ENCODE measurements at regions of chr14 and their contacts with region 1.

Region 1: GRCh38 chr14:99415496-99416281 is 65.0 kb downstream of the SETD3 start:
- H3K4me3 ChIP-seq: no peak overlapping the region
- H3K27ac ChIP-seq: no peak overlapping the region
- H3K4me1 ChIP-seq: peaks cover 2% of the 10 kb centered on the region; the same call in 1 of the 2 replicates
- CTCF ChIP-seq: peak; percentile 52

Region 2: DNA sequence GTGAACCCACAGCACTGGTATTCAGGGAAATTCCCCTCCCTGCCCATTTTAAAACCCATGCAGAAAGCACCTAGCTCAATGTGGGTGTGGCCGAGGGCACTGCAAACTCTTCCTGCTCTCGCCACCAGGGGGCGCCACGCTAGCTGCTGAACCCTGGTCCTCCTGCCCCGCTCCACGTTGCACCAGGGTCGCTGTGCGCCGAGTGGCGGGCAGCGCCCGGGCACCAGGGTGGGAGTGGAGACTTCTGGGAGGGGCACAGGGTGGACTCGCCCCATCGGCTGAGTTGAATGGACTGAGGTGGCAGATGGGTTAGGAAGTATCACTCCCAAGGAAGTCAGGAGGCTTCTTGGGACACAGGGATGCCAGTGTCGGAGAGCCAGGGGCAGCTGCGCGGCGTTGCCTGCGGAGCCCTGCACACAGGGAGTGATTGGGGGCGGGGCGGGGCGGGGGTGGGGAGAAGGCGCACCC is 95.5 kb before region 1 on chr14:
- CTCF ChIA-PET with region 1: interaction called, 39 read pairs
- POLR2A ChIA-PET with region 1: no interaction called
- H3K4me3 ChIP-seq: no peak overlapping the region; the same call in 1 of the 2 replicates
- H3K27ac ChIP-seq: no peak overlapping the region
- H3K4me1 ChIP-seq: no peaks in the 10 kb centered on the region
- CTCF ChIP-seq: peak; percentile 85

Region 3: DNA sequence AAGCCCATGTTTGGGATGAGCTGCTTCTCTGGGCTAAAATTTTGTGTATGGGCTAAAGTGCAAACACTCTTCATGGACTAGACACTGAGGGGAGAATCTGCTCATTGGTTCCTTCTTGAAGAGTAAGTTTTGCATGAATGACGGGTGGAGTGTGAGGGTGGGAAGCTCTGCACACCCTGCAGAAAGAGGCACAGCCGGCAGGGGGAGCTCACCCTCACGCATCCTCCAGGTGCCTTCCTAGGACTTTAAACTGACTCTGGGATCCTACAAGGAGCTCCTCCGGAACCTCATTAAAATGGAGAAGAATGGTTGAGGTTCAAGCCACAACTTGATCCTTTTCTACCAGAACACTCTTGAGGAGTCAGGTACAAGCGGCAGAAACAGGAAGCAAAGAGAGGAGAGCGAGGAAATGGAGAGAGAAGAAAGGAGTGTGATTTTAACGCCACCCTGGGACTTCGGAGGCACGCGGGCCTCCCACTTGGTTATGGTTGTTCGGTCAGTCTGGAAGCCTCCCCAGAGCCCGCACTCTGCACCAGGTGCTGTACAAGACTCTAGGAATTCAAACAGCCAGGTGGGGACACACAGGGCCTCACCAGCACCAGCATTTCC is 22.5 kb before region 1 on chr14:
- CTCF ChIA-PET with region 1: interaction called, 175 read pairs
- POLR2A ChIA-PET with region 1: no interaction called
- H3K4me3 ChIP-seq: no peak overlapping the region
- H3K27ac ChIP-seq: no peak overlapping the region
- H3K4me1 ChIP-seq: 0 out of 2 replicates have a peak, but pooled peaks cover 7% of the 10 kb centered on the region
- CTCF ChIP-seq: peak; percentile 32; the same call in 1 of the 2 replicates

Region 4: GRCh38 chr14:99401621-99402284 is 13.9 kb before region 1 on chr14:
- CTCF ChIA-PET with region 1: interaction called, 175 read pairs
- POLR2A ChIA-PET with region 1: no interaction called
- H3K4me3 ChIP-seq: no peak overlapping the region
- H3K27ac ChIP-seq: no peak overlapping the region
- H3K4me1 ChIP-seq: no peaks in the 10 kb centered on the region
- CTCF ChIP-seq: no peak

Region 5: DNA sequence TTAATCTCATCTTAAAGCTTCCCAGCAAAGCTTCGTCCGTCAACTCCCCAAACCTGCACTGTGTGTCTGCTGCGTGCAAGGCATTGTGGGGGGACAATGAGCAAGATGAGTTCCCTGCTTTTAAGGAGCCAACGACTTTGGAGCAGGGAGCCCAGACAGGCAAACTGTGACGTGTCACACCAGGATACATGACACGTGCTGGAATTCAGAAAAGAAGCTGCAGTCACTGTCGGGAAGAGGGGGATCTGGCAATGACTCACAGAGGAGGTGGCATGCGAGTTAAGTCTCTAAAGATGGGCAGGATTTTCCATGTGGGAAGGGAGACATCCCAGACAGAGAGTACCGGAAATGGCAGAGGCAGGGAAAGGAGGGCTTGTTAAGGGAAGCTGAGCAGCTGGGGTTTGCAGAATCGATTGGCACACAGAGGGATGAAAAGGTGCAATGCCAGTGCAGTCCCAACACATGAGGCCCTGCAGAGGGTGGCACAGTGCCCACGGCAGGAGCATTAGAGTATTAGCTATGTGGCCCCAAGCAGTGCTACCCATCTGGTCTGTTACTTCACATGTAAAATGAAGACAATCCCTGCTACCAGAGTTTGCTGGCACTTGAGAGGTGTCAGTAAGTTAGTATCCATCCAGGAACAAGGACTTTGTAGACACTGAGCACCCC is 12.1 kb after region 1 on chr14:
- CTCF ChIA-PET with region 1: interaction called, 32 read pairs
- POLR2A ChIA-PET with region 1: no interaction called
- H3K4me3 ChIP-seq: no peak overlapping the region
- H3K27ac ChIP-seq: no peak overlapping the region
- H3K4me1 ChIP-seq: no peaks in the 10 kb centered on the region
- CTCF ChIP-seq: no peak

Region 6: DNA sequence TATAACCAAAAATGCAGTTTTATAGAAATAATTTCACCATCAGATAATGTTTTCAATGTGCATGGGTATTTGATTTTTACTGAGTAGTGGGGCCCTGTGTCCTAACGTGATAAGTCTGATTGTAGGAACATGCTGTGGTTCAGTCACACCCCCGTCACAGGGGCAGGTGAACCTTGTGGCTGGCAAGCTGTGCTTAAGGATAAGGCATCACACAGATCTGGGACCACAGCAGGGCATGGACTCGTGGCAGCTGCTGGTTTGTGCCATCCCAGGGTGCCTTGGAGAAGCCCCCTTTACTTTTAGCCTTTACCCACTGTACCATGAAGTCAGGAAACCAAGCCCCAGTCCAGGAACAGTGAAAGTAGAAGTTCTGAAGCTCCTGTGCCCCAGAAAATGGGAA is 82.2 kb after region 1 on chr14:
- CTCF ChIA-PET with region 1: no interaction called
- POLR2A ChIA-PET with region 1: no interaction called
- H3K4me3 ChIP-seq: no peak overlapping the region
- H3K27ac ChIP-seq: no peak overlapping the region
- H3K4me1 ChIP-seq: no peaks in the 10 kb centered on the region
- CTCF ChIP-seq: no peak

Region 7: DNA sequence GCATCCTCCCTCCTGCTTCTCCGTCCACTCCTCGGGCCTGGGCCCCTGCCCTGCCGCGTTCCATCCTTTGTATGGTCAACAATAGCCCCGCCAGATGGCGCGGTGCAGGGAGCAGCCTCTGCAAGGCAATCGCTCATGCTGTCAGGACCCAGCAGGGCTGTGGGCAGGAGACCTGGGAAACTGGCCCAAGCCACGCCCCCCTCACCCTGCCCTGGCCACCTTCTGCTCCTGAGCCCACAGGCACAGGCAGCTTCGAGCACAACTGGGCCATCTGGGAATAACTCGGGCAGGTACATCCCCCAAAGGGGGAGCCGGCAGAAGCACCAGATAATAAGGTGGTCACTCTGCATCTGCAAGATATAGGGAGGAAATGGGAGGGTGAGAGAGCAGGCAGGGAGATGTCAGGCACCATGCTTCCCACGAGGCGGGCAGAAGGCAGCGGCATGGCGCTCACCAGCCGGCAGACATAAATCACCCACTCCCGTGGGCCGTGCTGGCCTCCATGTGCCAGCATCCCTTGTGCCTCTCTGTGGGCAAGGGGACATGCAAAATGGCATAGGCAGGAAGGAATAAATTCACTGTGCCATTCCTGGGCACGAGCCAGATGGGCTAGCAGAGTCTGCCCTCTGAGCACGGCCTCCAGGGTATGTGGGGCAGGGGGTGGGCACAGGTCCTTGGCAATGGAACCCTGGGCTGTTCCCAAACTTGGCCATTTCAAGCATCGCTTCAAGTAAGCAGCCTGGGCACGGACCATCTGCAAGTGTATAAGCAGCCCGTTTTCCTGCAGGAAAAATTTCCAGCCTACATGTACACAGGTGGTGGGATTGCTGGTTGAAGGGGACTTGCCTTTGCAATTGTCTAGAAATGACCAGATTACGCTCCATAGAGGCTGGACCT is 147.8 kb after region 1 on chr14:
- CTCF ChIA-PET with region 1: no interaction called
- POLR2A ChIA-PET with region 1: no interaction called
- H3K4me3 ChIP-seq: no peak overlapping the region
- H3K27ac ChIP-seq: no peak overlapping the region
- H3K4me1 ChIP-seq: peaks cover 29% of the 10 kb centered on the region
- CTCF ChIP-seq: peak; percentile 78

Measured in HEK293 (cell line).